MCF 10A (cell line): ENCODE measurements at regions of chr22 and their contacts with region 1.

Region 1: DNA sequence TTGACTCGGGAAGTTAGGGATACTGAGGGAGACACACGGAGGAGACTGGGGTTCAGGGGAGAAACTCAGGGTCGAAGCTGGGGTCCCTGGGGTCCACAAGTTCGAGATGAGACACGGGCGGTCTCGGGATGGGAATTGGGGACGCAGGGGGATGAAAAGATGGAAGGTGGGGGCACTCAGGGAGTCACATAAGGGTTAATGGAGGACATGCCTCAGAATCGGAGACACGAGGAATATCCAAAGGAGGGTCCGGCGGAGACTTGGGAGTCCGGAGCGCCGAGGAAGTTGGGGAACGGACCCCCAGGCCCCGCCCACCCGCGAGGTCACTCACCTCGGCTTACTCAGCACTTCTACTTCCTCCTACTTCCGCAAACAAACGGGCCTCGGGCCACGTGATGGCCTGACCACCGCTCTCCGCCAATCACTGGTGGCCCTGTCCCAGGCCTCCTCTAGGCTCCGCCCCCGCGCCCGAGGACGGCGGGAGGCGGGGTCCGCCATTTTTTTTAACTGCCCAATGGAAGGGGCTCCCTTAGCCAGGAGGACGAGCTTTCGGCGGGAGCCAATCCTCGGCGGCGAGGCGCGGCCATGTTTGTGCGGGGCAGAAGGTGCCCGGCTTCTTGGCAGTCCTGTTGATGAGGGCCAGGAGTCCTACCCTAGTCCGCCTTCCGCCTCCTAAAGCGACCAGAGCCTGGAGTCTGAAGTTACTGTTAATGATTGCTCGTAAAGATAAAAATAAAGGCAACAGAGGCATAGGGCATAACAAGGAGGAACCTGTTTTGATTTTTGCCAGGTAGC is at the start of gene PLA2G6:
- DNase-seq: peak; percentile 99
- H3K4me3 Mint-ChIP-seq: peak within 1 kb of the TSS; percentile 97
- H3K27ac Mint-ChIP-seq: peak within 1 kb of the TSS; percentile 99
- H3K4me1 Mint-ChIP-seq: peaks cover 34% of the 10 kb centered on the region
- H3K27me3 Mint-ChIP-seq: no peaks in the 10 kb centered on the region
- CTCF ChIP-seq: no peak
- total RNA-seq, gene PLA2G6: 37.5 and 40.3 TPM in 2 replicates

Region 2: DNA sequence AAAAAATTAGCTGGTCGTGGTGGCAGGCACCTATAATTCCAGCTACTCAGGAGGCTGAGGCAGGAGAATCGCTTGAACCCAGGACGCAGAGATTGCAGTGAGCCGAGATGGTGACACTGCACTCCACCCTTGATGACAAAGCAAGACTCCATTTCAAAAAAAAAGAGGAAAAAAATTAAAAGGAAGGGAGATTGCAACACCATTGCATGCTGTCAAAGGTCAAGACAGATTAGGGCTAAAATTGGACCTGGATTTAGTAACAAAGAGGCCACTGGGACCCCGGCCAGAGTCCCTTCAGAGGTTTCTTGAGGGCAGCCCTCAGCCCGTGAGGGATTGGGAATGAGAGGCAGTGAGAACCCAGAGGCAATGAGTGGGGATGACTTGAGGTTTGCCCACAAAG is 11.9 kb after region 1 on chr22:
- CTCF ChIA-PET with region 1: interaction called, 5 read pairs
- POLR2A ChIA-PET with region 1: interaction called, 10 read pairs
- intact Hi-C with region 1: no loop called
- DNase-seq: no peak
- H3K4me3 Mint-ChIP-seq: no peak overlapping the region
- H3K27ac Mint-ChIP-seq: no peak overlapping the region
- H3K4me1 Mint-ChIP-seq: peaks cover 11% of the 10 kb centered on the region
- H3K27me3 Mint-ChIP-seq: no peaks in the 10 kb centered on the region
- CTCF ChIP-seq: no peak

Region 3: DNA sequence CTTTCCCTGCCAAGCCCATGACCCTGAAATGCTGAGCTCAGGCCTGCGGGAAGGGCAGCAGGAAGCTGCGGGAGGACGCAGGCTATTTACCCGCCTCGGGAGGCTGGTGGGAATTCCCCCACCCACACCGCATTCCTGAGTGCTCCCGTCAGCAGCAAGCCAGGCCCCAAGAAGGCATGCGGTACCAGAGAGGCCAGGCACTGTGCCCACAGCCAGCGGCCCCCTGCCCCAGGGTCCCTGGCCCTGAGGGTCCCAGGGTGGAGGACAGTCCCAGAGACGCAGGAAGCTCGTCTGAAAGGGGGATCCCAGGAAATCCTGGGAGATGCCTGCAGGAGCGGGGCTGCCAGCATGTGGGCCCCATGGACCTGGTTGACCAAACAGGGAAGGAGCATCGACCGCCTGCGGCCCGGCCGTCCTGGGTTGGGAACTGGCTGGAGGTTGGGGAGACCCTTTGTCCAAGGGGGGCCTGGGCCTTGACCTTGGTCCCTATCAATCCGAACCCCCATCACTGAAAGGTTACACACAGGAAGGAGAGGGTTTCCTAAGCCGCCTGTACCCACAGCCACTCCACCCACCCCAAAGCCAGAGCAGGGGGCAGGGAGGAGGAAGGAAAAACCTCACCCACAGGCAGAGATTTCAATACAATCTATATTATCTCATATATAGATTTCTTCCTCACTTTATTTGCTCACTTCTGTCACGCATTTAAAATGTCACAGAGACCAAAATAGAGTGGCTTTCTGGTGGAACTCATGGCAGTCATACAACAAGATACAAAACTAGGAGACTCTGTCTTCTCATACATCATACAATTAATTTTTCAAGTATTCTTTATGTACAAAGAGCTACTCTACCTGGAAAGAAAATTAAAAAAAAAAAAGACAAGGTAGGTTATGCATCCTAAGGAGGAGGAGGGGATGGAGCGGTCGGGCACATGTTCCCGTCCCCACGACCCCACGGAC is 37.3 kb after region 1 on chr22:
- CTCF ChIA-PET with region 1: no interaction called
- POLR2A ChIA-PET with region 1: interaction called, 28 read pairs
- intact Hi-C with region 1: no loop called
- DNase-seq: peak; percentile 93
- H3K4me3 Mint-ChIP-seq: peak overlapping the region; percentile 26
- H3K27ac Mint-ChIP-seq: peak overlapping the region; percentile 97
- H3K4me1 Mint-ChIP-seq: peaks cover 48% of the 10 kb centered on the region
- H3K27me3 Mint-ChIP-seq: no peaks in the 10 kb centered on the region
- CTCF ChIP-seq: no peak